Panc1 (cell line): ENCODE measurements at regions of chr10 and their contacts with region 1.

Region 1: GRCh38 chr10:121974535-121975294 is at the start of gene NSMCE4A:
- DNase-seq: no peak
- ATAC-seq: peak; percentile 97
- H3K4me3 ChIP-seq: peak within 1 kb of the TSS; percentile 70 to 83
- H3K27ac ChIP-seq: peak within 1 kb of the TSS; percentile 85
- H3K4me1 ChIP-seq: peaks cover 8% of the 10 kb centered on the region
- H3K27me3 ChIP-seq: no peaks in the 10 kb centered on the region
- CTCF ChIP-seq: peak; percentile 98
- total RNA-seq, gene NSMCE4A: 72.2 TPM

Region 2: GRCh38 chr10:121961456-121961855 is 13.3 kb before region 1 on chr10:
- CTCF ChIA-PET with region 1: interaction called, 4 read pairs
- POLR2A ChIA-PET with region 1: interaction called, 11 read pairs
- in situ Hi-C with region 1: no loop called
- intact Hi-C with region 1: no loop called
- DNase-seq: no peak
- ATAC-seq: no peak
- H3K4me3 ChIP-seq: no peak overlapping the region
- H3K27ac ChIP-seq: no peak overlapping the region
- H3K4me1 ChIP-seq: no peaks in the 10 kb centered on the region
- H3K27me3 ChIP-seq: no peaks in the 10 kb centered on the region
- CTCF ChIP-seq: no peak

Region 3: DNA sequence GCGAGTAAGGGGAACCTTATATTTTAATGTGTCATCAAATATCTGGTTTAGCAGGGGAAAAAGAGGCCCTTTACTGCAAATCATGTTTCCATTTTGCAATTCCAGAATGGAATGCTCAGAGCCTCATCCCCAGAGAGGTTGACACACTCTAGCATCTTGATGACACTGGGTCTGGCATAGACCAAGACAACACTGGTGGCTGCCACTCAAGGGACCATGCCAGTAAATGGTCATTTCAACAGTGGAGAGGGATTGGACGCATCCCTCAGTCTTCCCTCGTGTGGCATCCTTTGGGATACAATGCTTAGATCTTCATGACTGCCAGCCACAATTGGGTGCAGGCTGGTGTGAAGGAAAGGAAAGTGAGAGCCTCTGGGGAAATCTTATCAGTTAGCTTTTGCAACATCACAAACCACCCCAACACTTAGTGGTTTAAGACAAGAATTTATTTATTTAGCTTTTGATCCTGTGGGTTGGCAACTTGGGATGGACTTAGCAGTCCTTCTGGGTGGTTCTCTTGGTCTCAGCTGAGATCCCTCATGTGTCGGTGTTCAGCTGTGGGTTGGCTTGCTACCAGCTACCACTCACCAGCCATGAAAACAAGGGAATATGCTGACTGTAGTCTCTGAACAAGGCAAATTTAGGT is 35.8 kb after region 1 on chr10:
- CTCF ChIA-PET with region 1: no interaction called
- POLR2A ChIA-PET with region 1: no interaction called
- in situ Hi-C with region 1: no loop called
- intact Hi-C with region 1: no loop called
- DNase-seq: no peak
- ATAC-seq: no peak
- H3K4me3 ChIP-seq: no peak overlapping the region
- H3K27ac ChIP-seq: no peak overlapping the region
- H3K4me1 ChIP-seq: no peaks in the 10 kb centered on the region
- H3K27me3 ChIP-seq: no peaks in the 10 kb centered on the region
- CTCF ChIP-seq: no peak

Region 4: DNA sequence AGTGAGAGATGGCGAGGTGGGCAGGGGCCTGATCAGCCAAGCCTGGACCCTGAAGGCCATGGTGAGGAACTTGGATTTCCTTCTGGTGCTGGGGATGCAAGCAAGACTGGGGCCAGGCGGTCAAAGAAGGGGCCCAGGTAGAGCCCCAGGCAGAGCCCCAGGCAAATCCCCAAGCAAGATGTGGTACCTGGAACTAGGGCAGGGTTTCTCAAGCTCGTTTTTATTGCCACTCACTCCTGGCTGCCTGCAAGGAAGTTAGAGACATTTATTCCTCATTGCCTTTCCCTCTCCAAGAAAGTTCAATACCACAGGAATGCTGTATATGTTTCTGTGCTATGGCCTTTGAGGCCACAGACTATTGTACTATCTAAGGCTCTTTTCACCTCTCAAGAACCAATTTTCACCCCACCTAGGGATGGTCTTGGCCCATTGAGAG is 85.5 kb after region 1 on chr10:
- CTCF ChIA-PET with region 1: no interaction called
- POLR2A ChIA-PET with region 1: no interaction called
- in situ Hi-C with region 1: no loop called
- intact Hi-C with region 1: no loop called
- DNase-seq: no peak
- ATAC-seq: no peak
- H3K4me3 ChIP-seq: no peak overlapping the region
- H3K27ac ChIP-seq: peak overlapping the region; percentile 73
- H3K4me1 ChIP-seq: peaks cover 44% of the 10 kb centered on the region
- H3K27me3 ChIP-seq: no peaks in the 10 kb centered on the region
- CTCF ChIP-seq: no peak